K562 (cell line): ENCODE measurements at regions of chr2 and their contacts with region 1.

Region 1: DNA sequence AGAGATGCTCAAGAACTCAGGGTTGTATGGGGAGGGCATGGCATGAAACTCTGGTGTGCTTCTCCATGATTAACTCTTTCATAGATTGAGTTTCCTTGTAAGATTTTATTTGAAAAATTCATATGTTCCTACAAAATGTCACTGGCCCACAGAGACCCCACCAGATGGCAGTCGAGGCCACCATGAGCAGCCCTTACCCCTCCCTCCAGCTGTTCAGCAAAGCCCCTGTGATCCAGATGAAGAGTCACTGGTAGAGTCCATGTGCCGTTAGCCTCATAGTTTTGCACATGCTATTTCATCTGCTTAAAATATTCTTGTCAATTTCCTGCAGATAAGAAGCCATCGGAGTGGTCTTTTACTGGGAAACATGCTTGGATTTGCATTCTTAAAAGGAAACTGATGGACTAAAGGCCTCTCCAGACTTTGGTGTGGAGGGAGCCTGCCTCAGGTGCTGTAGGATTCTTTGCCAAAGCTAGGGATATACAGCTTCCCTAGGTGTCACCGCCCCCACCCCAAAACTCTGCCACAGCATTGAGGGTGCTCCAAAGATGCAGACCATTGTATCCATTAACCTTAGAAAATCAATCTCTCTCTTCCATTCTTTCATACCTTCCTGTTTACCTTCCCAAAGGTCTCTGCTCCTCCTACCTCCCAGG is 18.8 kb downstream of the ZNF385B start:
- DNase-seq: peak; percentile 43 to 59 (median 54)
- ATAC-seq: peak; percentile 94
- H3K4me3 ChIP-seq: no peak overlapping the region
- H3K27ac ChIP-seq: no peak overlapping the region
- H3K4me1 ChIP-seq: no peaks in the 10 kb centered on the region
- H3K27me3 ChIP-seq: no peaks in the 10 kb centered on the region
- CTCF ChIP-seq: peak; percentile 67 to 68 (median 67)
- EP300 ChIP-seq: no peak
- POLR2A ChIP-seq: no peak
- RAD21 ChIP-seq: peak; percentile 53 to 75

Region 2: GRCh38 chr2:179898873-179899272 is 56.2 kb after region 1 on chr2:
- CTCF ChIA-PET with region 1: no interaction called
- POLR2A ChIA-PET with region 1: no interaction called
- in situ Hi-C with region 1: no loop called
- intact Hi-C with region 1: loop called (anchors 1 kb)
- DNase-seq: peak; percentile 24 to 74 (median 30)
- ATAC-seq: peak; percentile 100
- H3K4me3 ChIP-seq: no peak overlapping the region
- H3K27ac ChIP-seq: no peak overlapping the region
- H3K4me1 ChIP-seq: no peaks in the 10 kb centered on the region
- H3K27me3 ChIP-seq: no peaks in the 10 kb centered on the region
- CTCF ChIP-seq: peak; percentile 56 to 73 (median 64)
- EP300 ChIP-seq: no peak
- POLR2A ChIP-seq: no peak
- RAD21 ChIP-seq: peak; percentile 44 to 67

Region 3: GRCh38 chr2:179936654-179937053 is 94.0 kb after region 1 on chr2:
- CTCF ChIA-PET with region 1: no interaction called
- POLR2A ChIA-PET with region 1: no interaction called
- in situ Hi-C with region 1: no loop called
- intact Hi-C with region 1: loop called (anchors 5 kb)
- DNase-seq: peak; percentile 22 to 73 (median 54)
- ATAC-seq: peak; percentile 89
- H3K4me3 ChIP-seq: no peak overlapping the region
- H3K27ac ChIP-seq: no peak overlapping the region
- H3K4me1 ChIP-seq: no peaks in the 10 kb centered on the region
- H3K27me3 ChIP-seq: no peaks in the 10 kb centered on the region
- CTCF ChIP-seq: peak; percentile 61 to 67 (median 65)
- EP300 ChIP-seq: no peak
- POLR2A ChIP-seq: no peak
- RAD21 ChIP-seq: peak in 1 of 2 experiments; percentile 56; a peak in 2 of 4 replicates